ENCODE measurements at regions of chr4 and their contacts with region 1.

Region 1: GRCh38 chr4:102500696-102501446 is at the start of gene NFKB1:
- DNase-seq: peak; percentile 81
- H3K4me3 ChIP-seq: peak within 1 kb of the TSS; percentile 83 to 93 (median 88)
- H3K27ac ChIP-seq: peak within 1 kb of the TSS; percentile 90
- H3K4me1 ChIP-seq: peaks cover 22% of the 10 kb centered on the region
- H3K27me3 ChIP-seq: no peaks in the 10 kb centered on the region
- CTCF ChIP-seq: no peak
- POLR2A ChIP-seq: peak; percentile 54
- total RNA-seq, gene NFKB1: 41.4 and 42.0 TPM in 2 replicates

Region 2: DNA sequence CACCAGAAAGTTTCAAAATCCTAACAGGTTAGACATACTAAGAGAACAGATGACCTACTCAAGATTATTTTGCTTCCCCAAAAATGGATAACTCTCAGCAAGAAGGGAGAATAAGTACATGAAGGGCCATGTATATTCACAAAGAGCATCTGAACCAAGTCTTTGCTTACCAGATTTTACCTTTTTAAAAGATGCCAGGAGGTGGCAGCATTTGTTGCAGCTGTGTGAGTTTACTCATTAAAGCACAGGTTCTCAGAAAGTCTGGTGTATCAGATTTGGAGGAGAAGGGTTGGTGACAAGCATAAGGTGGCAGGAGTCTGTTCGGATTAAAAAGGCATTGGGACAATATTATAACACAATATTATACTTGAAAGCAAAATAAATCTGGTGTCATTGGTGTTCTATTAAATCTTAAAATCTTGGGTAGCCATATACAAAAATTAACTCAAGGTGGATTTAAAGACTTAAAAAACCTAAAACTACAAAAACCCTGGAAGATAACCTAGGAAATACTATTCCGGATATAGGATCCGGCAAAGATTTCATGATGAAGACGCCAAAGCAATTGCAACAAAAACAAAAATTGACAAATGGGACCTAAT is 51.0 kb before region 1 on chr4:
- CTCF ChIA-PET with region 1: interaction called, 3 read pairs
- POLR2A ChIA-PET with region 1: interaction called, 3 read pairs
- dilution Hi-C with region 1: no loop called
- intact Hi-C with region 1: loop called (anchors 2 kb)
- DNase-seq: peak; percentile 74
- H3K4me3 ChIP-seq: no peak overlapping the region
- H3K27ac ChIP-seq: no peak overlapping the region
- H3K4me1 ChIP-seq: no peaks in the 10 kb centered on the region
- H3K27me3 ChIP-seq: no peaks in the 10 kb centered on the region
- CTCF ChIP-seq: peak; percentile 40 to 58
- POLR2A ChIP-seq: no peak

Region 3: DNA sequence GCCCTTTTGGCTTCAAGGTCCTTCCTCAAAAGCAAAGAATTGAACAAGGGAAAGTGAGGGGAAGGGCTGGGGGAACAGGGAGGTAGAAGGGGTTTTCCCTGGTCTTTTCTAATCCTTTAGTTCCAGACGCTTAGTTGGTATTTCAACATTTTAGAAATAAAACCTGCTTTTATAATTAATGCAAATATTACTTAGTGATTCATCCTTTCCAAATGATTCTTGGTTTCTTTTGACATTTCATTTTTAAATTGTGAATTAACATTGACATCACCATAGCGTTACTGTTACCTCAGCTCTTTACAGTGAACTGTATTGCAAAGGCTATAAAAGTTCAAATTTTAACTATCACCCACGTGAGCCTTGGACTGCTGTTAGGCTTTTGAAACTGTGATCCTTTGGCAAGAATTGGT is 21.2 kb after region 1 on chr4:
- CTCF ChIA-PET with region 1: no interaction called
- POLR2A ChIA-PET with region 1: no interaction called
- dilution Hi-C with region 1: no loop called
- intact Hi-C with region 1: loop called (anchors 2 kb)
- DNase-seq: no peak
- H3K4me3 ChIP-seq: no peak overlapping the region
- H3K27ac ChIP-seq: no peak overlapping the region
- H3K4me1 ChIP-seq: no peaks in the 10 kb centered on the region
- H3K27me3 ChIP-seq: no peaks in the 10 kb centered on the region
- CTCF ChIP-seq: no peak
- POLR2A ChIP-seq: no peak

Region 4: DNA sequence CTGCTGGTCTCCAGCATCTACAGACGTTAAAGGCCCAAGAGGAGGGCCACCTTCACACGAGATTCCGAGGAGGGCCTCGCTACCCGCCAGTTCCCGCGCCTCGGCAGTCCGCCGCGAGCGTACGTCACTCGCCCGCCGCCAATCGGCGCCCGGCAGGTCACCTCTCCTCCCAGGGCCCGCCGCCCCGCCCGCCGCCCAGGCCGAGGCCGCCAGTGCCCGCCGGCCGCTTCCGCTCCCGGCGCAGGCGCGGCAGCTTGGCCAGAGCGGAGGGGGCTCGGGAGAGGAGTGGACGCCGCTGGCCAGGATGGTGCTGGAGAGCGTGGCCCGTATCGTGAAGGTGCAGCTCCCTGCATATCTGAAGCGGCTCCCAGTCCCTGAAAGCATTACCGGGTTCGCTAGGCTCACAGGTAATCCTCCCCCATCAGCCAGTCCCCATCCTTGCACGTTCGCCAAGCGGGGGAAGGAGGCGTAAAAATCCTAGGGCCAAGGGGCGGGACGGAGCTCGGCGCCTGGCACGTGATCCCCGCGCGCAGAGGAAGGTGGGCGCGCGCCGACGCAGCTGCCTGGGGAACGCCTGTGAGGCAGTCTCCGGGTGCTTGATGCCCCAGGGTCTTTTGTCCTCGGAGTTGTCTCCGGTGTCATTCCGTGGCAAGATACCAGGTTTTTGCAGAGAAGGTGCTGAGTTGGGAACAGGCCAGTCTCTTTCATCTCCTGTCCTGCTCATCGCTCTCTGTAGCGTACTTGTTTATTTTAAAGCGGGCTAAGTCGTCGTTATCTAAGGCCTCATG is 368.1 kb after region 1 on chr4 and contains the start of gene CISD2:
- CTCF ChIA-PET with region 1: no interaction called
- POLR2A ChIA-PET with region 1: no interaction called
- dilution Hi-C with region 1: no loop called
- intact Hi-C with region 1: loop called (anchors 2 kb)
- DNase-seq: peak; percentile 94
- H3K4me3 ChIP-seq: peak within 1 kb of the TSS; percentile 43 to 88 (median 78)
- H3K27ac ChIP-seq: peak within 1 kb of the TSS; percentile 76
- H3K4me1 ChIP-seq: peaks cover 25% of the 10 kb centered on the region
- H3K27me3 ChIP-seq: no peaks in the 10 kb centered on the region
- CTCF ChIP-seq: no peak
- POLR2A ChIP-seq: peak; percentile 91
- total RNA-seq, gene CISD2: 26.5 and 28.4 TPM in 2 replicates

Region 5: DNA sequence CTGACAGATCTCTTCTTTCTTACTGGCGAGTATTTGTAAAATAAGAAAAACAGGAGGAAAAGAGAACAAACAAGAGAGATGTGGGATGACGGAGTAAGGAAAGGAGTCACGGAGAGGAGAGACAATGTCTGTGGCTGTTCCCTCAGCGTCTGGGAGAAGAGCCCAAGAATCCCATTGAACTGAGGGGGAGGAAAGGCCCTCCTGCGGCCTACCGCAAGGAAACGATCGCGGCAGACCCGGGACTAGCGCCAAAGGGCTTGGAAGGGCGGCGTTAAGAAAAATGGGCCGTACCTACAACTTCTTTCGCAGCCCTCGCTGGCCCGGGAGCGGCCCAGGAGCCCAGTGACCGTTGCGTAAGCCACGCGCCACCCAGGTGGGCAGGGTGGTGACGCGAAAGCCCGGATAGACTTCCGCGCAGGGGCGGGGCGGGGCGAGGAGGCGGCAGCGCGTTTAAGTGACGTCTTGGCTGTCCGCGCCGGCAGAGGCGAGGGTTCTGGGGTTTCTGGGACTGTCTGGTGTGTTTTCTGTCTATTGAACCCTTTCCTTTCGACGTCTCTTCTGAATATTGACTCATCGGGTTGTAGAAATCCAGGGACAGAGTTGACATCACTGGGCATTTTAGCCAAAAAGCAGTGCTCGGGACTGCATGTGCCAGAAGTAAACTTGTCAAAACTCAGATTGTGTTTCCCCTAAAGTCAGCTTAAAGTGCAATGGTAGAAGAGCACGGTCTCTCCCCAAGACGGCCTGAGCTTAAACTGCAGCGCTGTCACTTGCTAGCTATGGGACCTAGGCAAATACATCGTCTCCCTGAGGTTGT is 518.6 kb after region 1 on chr4 and contains the start of gene SLC9B1:
- CTCF ChIA-PET with region 1: no interaction called
- POLR2A ChIA-PET with region 1: no interaction called
- dilution Hi-C with region 1: no loop called
- intact Hi-C with region 1: loop called (anchors 1 kb)
- DNase-seq: peak; percentile 96
- H3K4me3 ChIP-seq: peak within 1 kb of the TSS; percentile 28 to 62 (median 48)
- H3K27ac ChIP-seq: peak within 1 kb of the TSS; percentile 68
- H3K4me1 ChIP-seq: peaks cover 8% of the 10 kb centered on the region
- H3K27me3 ChIP-seq: no peaks in the 10 kb centered on the region
- CTCF ChIP-seq: no peak
- POLR2A ChIP-seq: peak; percentile 79
- total RNA-seq, gene SLC9B1: 0.49 TPM in 1 of 2 replicates, not detected in the other

Measured in endothelial cell of umbilical vein (primary cell).